Left lung (tissue), 14 donors: ENCODE measurements at regions of chr11 and their contacts with region 1.

Region 1: GRCh38 chr11:68257475-68258362 is 14.1 kb downstream of the C11orf24 start:
- DNase-seq: peak; percentile 85 to 98 (median 94)
- ATAC-seq: peak; percentile 96
- H3K4me3 ChIP-seq: no peak overlapping the region
- H3K27ac ChIP-seq: no peak overlapping the region
- H3K4me1 ChIP-seq: peaks cover 6 to 11% of the 10 kb centered on the region in 2 donors
- H3K27me3 ChIP-seq: no peaks in the 10 kb centered on the region
- CTCF ChIP-seq: peak; percentile 78 to 80

Region 2: DNA sequence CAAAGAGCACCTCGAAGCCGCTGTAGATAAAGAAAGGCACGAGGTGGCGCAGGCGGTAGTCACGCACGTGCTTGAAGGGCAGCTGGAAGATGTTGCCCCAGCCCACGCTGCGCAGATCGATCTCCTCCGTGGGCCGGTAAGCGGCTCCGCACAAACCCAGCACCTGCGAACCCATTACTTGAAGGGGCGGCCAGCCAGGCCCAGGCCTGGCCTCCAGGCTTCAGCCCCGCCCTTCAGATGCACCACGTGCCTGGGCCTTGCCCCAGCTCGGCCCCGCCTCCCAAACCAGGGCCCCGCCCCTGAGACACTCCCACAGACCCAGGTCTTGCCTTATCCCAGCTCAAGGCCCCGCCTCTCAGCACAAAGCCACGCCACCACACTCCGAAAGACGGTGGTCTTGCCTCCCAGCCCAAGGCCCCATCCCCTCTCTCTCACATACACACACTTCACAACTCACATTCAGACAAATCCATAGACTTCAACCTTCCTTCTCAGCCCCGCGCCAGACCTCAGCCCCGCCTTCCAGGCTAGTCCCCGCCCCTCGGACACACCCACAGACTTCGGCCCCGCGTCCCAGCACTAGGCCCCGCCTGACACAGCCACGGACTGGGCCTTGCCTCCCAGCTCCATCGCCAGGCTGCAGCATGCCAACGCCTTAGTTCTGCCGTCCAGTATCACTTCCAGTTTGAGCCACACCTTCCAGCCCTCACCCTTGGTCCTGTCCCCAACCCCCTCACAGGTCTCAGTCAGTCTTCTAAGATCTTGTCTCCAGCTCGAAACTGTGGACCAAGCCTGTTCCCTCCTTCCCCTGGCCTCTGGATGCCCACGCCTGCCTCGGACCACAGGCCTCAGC is 260.9 kb before region 1 on chr11:
- intact Hi-C with region 1: no loop called
- DNase-seq: peak in 2 of 4 donors; percentile 80 to 94
- ATAC-seq: peak; percentile 96
- H3K4me3 ChIP-seq: no peak overlapping the region
- H3K27ac ChIP-seq: no peak overlapping the region
- H3K4me1 ChIP-seq: peaks cover 5 to 46% of the 10 kb centered on the region in 2 donors
- H3K27me3 ChIP-seq: no peaks in the 10 kb centered on the region
- CTCF ChIP-seq: no peak

Region 3: DNA sequence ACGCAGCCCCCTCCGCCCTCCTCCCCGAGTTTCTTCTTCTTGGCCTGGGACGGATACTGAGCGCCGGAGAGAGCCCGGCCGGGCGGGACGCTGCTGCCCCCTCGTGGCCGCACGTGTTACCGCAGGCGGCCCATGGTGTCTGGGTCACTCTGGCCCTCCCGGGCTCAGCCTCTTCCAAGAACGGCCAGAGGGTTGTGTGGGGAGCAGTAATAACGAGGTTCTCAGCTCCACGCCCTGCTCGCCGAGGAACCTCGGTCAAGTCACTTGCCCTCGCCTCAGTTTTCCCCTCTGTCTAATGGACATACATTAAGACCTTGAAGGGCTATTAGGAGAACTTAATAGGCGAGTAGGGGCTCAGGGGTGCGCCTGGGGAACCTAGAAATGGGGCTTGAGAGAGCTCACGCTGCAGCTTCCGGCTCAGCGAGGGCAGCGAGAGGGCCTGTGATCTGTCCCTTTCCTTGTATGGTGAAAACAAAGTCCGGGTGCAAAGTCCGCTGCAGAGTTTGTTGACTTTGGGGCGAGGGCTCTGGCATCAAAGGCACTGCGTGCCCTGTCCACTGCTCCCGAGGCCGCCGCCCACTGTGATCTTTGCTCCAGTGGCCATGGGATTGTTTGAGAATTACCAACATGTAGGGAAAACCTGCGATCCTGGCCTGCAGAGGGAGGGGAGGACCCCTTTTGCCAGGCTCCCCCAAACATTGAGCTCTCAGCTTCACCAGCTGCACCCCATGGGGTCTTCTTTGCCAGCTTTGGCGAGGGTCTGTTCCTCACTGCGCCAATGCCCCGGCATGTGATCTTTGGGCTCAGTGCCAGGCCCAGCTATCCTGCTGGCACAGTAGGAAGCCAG is 40.3 kb after region 1 on chr11:
- intact Hi-C with region 1: loop called in 1 of 2 experiments (anchors 5 kb)
- DNase-seq: peak; percentile 56 to 97 (median 79)
- ATAC-seq: peak; percentile 100
- H3K4me3 ChIP-seq: no peak overlapping the region
- H3K27ac ChIP-seq: no peak overlapping the region
- H3K4me1 ChIP-seq: peaks cover 3 to 18% of the 10 kb centered on the region in 2 donors
- H3K27me3 ChIP-seq: no peaks in the 10 kb centered on the region
- CTCF ChIP-seq: peak; percentile 98 to 99

Region 4: GRCh38 chr11:68447015-68447801 is 189.5 kb after region 1 on chr11:
- intact Hi-C with region 1: loop called in 1 of 2 experiments (anchors 5 kb)
- DNase-seq: peak; percentile 67 to 95 (median 79)
- ATAC-seq: peak; percentile 95
- H3K4me3 ChIP-seq: no peak overlapping the region
- H3K27ac ChIP-seq: no peak overlapping the region
- H3K4me1 ChIP-seq: peaks cover 0 to 4% of the 10 kb centered on the region in 2 donors
- H3K27me3 ChIP-seq: no peaks in the 10 kb centered on the region
- CTCF ChIP-seq: peak; percentile 95

Region 5: DNA sequence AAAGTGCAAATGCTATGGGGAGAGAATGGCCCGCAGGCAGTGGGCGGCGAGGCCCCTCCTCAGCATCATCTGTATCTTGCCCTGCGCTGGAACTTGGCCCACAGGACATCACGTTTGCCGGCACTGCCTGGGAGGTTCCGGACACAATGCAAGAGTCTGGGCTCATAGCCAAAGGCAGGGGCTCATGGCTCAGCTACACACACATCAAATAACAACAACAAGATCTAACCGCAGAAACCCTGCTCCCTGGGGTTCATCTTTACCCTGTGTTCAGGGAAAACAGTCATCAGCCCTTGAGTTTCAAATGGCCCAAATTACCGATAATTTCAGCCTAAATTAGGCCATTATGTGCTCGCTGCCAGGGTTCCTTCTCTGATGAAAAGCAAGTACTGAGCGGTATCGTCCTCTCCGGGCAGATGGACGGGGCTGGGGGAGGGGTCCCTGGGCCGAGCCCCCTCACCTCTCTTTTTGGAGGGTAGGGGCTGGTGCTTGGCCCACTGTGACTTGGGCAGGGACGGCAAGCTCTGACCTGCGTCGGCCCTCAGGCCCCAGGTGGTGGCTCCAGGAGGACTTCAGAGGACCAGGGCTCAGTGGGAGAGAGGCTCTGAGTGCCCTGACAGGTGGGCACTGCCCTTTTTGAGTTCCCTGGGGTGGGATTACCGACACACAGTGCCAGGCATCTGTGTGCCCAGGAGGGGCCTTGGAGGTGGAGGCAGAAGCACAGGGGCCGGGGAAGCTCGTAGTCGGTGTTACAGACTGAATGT is 401.6 kb after region 1 on chr11:
- intact Hi-C with region 1: no loop called
- DNase-seq: peak; percentile 57 to 89 (median 74)
- ATAC-seq: peak; percentile 67
- H3K4me3 ChIP-seq: no peak overlapping the region
- H3K27ac ChIP-seq: no peak overlapping the region
- H3K4me1 ChIP-seq: no peaks in the 10 kb centered on the region
- H3K27me3 ChIP-seq: peaks cover 0 to 20% of the 10 kb centered on the region in 2 donors
- CTCF ChIP-seq: no peak